ENCODE measurements at regions of chr1 and their contacts with region 1.

Region 1: DNA sequence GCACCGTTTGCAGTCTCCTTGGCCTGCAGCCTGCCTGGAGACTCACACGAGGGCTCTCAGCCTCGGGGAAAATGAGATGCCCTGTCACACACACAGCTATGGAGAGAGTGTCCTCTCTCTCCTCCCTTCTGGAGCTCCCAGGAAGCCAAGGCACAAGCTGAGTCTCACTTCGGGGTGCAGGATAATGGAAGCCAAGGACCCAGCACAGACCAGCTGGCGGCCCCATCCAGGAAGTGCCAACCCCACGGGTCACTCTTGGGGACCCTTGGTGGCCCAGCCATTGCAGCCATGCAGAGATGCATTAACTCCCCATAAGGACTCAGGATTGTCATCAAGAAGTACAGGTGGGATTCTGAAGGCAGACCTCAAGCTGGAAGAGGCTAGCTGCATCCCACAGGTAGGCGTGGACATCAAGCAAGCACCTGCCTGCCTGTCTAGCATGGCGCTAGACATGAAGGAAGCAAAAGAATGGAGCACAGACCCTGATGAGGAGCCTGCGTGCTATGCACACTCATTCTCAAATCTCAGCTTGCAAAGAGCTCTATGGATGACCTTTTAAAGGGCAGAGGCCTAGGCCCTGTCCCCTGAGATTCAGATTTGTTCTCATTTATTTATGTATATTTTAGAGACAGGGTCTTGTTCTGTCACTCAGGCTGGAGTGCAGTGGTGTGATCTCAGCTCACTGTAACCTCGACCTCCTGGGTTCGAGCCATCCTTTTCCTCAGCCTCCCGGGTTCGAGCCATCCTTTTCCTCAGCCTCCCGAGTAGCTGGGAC is 49.9 kb downstream of the IRF2BP2 start:
- DNase-seq: no peak
- ATAC-seq: no peak
- H3K4me3 ChIP-seq: no peak overlapping the region
- H3K27ac ChIP-seq: no peak overlapping the region
- H3K4me1 ChIP-seq: peaks cover 15% of the 10 kb centered on the region
- H3K27me3 ChIP-seq: no peaks in the 10 kb centered on the region
- CTCF ChIP-seq: no peak

Region 2: GRCh38 chr1:234582681-234583301 is 22.7 kb after region 1 on chr1:
- CTCF ChIA-PET with region 1: no interaction called
- POLR2A ChIA-PET with region 1: interaction called, 12 read pairs
- intact Hi-C with region 1: no loop called
- DNase-seq: no peak
- ATAC-seq: no peak
- H3K4me3 ChIP-seq: no peak overlapping the region
- H3K27ac ChIP-seq: no peak overlapping the region
- H3K4me1 ChIP-seq: no peaks in the 10 kb centered on the region
- H3K27me3 ChIP-seq: no peaks in the 10 kb centered on the region
- CTCF ChIP-seq: no peak

Region 3: DNA sequence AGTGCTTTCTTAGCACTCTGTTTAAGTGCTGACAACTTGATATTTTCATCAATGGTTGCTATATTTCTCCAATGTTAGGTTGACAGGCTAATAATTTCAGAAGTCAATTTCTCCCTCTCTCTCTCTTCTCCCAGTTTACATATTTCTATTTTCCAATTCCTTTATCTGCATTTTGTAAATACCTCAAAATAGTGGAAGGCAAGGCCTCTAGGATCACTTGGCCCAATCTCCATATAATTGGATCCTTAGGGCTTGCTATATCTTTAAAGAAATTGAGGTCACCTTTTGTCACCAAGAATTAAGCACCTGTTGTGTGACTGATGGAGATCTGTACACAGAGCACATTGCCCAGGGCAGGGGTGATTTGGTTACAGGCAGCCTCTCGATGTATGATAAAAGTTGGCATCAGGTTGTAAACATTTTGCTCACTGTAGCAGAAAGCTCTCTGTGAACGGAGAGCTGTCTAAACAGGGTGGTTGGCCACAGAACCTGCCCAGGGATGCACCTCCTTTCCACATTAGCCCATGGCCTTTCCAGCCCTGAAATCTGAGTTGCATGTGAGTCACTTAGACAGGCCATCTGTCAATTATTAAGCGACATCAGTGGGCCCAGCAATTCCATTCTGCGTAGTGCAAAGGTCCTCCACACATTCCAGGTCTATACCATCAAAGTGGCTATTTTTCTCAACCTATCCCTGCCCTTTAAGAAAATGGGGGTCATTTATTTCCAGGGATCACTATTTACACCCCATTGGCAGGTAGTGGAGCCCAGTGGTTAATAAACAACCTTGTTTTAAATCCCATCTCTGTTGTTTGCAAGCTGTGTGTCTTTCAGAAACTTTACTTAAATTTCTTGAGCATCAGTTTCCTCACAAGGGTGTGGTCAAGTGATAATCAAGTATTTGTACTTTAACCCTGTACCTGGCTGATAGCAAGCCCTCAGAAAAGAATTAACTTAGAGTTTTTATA is 79.0 kb after region 1 on chr1:
- CTCF ChIA-PET with region 1: no interaction called
- POLR2A ChIA-PET with region 1: no interaction called
- intact Hi-C with region 1: no loop called
- DNase-seq: peak; percentile 75
- ATAC-seq: peak; percentile 84
- H3K4me3 ChIP-seq: no peak overlapping the region
- H3K27ac ChIP-seq: peak overlapping the region; percentile 31
- H3K4me1 ChIP-seq: peaks cover 22% of the 10 kb centered on the region
- H3K27me3 ChIP-seq: no peaks in the 10 kb centered on the region
- CTCF ChIP-seq: no peak

Measured in PC-3 (cell line).